ENCODE measurements at regions of chr9 and their contacts with region 1.

Region 1: DNA sequence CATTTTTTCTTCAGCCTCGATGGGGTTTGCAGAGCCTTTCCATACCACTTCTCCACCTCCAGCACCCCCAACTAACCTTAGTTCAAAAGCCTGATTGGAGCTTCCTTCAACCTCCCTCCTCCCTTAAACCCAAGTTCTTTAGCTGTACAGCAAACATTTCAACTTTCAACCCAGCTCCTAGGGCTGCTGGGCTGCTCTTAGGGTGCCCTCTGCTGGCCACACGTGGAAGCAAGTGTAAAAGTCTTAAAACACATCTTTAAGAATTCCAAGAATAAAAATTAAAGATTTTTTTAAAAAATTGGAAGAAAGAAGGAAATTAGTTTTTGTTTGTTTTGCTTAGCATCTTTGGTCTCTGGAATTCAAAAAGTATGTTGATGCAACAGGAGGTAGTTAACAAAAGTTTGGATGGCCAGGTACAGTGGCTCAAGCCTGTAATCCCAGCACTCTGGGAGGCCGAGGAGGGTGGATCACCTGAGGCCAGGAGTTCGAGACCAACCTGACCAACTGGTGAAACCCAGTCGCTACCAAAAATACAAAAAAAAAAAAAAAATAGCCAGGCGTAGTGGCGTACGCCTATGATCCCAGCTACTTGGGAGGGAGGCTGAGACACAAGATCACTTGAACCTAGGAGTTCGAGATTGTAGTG is 15.5 kb upstream of the HSD17B3 start:
- DNase-seq: no peak
- H3K4me3 Mint-ChIP-seq: no peak overlapping the region
- H3K27ac Mint-ChIP-seq: no peak overlapping the region
- H3K4me1 Mint-ChIP-seq: no peaks in the 10 kb centered on the region
- H3K27me3 Mint-ChIP-seq: peaks cover 4% of the 10 kb centered on the region

Region 2: GRCh38 chr9:96232539-96233241 is 84.8 kb before region 1 on chr9:
- intact Hi-C with region 1: loop called (anchors 1 kb)
- DNase-seq: no peak
- H3K4me3 Mint-ChIP-seq: no peak overlapping the region
- H3K27ac Mint-ChIP-seq: no peak overlapping the region
- H3K4me1 Mint-ChIP-seq: peaks cover 1% of the 10 kb centered on the region
- H3K27me3 Mint-ChIP-seq: peaks cover 40% of the 10 kb centered on the region

Region 3: GRCh38 chr9:96299823-96300222 is 17.6 kb before region 1 on chr9:
- intact Hi-C with region 1: no loop called
- DNase-seq: no peak
- H3K4me3 Mint-ChIP-seq: no peak overlapping the region
- H3K27ac Mint-ChIP-seq: no peak overlapping the region
- H3K4me1 Mint-ChIP-seq: no peaks in the 10 kb centered on the region
- H3K27me3 Mint-ChIP-seq: no peaks in the 10 kb centered on the region

Measured in activated T-helper 2 cell treated with anti-CD3 and anti-CD28 coated beads, Interferon-gamma antibody, Interleukin-2, Interleukin-4, amounts not matched to agents 10 μg/mL and 5 μg/mL and 100 μg/mL, durations not matched to agents 14 hours and 24 hours and 36 hours (primary cell).